PC-9 (cell line): ENCODE measurements at regions of chr3 and their contacts with region 1.

Region 1: GRCh38 chr3:31579828-31580227 is 47.1 kb downstream of the STT3B start:
- DNase-seq: no peak
- H3K4me3 ChIP-seq: no peak overlapping the region
- H3K27ac ChIP-seq: no peak overlapping the region
- H3K4me1 ChIP-seq: no peaks in the 10 kb centered on the region
- H3K27me3 ChIP-seq: no peaks in the 10 kb centered on the region
- CTCF ChIP-seq: no peak

Region 2: DNA sequence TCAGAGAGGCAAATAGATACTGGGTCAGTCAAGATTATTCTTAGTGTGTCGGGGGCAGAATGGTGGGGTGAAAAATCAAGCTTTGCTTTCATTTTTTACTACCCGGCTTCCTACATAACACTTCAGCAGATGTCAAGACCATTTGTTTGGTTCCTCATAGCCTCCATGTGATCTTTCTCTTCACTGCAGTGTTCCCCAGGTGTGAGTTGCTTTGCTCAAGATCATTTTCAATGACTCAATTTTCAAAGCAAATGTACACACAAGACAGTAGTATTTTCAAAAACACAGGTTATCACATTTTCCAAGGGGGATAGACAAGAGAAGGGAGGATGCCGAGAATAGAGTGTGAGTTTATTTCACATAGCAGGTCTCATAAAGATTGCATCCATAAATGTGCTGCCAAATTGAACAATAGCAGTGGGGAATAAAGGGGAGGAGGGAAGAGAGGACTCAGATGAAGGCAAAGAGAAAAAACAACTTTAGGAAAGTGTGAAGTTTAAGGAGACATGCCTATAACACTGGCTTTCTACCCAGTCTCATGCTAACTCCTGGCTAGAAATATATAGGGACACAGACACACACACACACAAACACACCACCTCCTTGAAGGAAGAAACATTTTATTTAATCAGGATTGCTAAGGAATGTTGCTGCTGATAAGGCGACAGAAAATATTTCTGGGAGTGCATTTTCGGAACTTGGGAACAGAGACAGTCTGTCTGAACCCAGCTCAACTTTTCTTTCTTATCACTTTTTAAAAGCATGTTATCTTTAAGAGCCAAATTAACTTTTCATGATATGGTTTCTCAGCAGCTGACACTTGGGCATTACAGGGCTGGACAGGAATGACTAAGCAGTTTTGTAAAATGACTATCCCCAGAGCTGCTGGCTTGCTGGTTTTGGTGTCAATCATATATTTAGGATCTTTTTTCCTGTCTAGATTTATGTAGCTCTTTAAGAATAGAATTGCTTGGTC is 1896.5 kb before region 1 on chr3:
- CTCF ChIA-PET with region 1: no interaction called
- POLR2A ChIA-PET with region 1: no interaction called
- intact Hi-C with region 1: no loop called
- DNase-seq: peak in 1 of 2 experiments; percentile 17
- H3K4me3 ChIP-seq: no peak overlapping the region
- H3K27ac ChIP-seq: peak overlapping the region; percentile 64
- H3K4me1 ChIP-seq: peaks cover 12% of the 10 kb centered on the region
- H3K27me3 ChIP-seq: no peaks in the 10 kb centered on the region
- CTCF ChIP-seq: no peak

Region 3: DNA sequence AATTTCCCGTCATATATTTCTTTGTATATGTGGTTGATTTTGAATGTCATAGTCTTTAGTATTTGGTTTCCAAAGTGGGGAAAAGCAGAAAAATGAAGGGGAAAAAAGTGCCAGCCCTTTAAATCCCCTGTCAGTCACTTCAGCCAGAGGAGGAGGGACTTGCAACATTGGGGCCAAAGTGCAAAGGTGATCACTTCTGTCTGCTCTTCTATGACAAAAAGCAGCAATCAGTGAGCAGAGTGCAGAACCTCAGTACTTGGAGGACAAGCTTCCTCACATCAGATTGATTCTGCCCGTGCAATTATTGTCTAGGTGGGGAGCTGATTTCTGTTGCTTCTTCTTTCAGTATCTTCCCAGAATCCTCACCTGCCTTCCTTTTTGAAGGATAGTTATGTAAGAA is 12.9 kb after region 1 on chr3:
- CTCF ChIA-PET with region 1: no interaction called
- POLR2A ChIA-PET with region 1: interaction called, 13 read pairs
- intact Hi-C with region 1: no loop called
- DNase-seq: no peak
- H3K4me3 ChIP-seq: no peak overlapping the region
- H3K27ac ChIP-seq: no peak overlapping the region
- H3K4me1 ChIP-seq: no peaks in the 10 kb centered on the region
- H3K27me3 ChIP-seq: no peaks in the 10 kb centered on the region
- CTCF ChIP-seq: no peak

Region 4: DNA sequence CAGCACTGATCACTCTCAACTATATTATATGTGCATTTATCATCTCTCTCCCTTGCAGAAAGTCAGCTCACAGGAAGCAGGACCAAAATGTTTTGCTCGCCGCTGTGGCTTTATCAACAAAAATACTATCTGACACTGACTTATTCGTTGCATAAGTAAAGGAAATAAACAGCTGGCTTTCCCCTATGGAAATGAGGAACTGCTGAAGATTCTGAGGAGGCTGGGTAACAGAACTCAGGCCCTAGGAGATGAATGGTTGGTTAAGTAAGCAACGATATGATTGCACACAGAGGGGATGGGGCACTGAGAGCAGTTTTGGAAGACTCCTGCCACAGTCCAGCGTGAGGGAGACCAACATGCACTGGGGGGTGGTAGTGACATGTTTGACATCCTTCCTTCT is 134.0 kb after region 1 on chr3:
- CTCF ChIA-PET with region 1: no interaction called
- POLR2A ChIA-PET with region 1: no interaction called
- intact Hi-C with region 1: no loop called
- DNase-seq: no peak
- H3K4me3 ChIP-seq: no peak overlapping the region
- H3K27ac ChIP-seq: no peak overlapping the region
- H3K4me1 ChIP-seq: no peaks in the 10 kb centered on the region
- H3K27me3 ChIP-seq: no peaks in the 10 kb centered on the region
- CTCF ChIP-seq: no peak